ENCODE measurements at regions of chr6 and their contacts with region 1.

Region 1: DNA sequence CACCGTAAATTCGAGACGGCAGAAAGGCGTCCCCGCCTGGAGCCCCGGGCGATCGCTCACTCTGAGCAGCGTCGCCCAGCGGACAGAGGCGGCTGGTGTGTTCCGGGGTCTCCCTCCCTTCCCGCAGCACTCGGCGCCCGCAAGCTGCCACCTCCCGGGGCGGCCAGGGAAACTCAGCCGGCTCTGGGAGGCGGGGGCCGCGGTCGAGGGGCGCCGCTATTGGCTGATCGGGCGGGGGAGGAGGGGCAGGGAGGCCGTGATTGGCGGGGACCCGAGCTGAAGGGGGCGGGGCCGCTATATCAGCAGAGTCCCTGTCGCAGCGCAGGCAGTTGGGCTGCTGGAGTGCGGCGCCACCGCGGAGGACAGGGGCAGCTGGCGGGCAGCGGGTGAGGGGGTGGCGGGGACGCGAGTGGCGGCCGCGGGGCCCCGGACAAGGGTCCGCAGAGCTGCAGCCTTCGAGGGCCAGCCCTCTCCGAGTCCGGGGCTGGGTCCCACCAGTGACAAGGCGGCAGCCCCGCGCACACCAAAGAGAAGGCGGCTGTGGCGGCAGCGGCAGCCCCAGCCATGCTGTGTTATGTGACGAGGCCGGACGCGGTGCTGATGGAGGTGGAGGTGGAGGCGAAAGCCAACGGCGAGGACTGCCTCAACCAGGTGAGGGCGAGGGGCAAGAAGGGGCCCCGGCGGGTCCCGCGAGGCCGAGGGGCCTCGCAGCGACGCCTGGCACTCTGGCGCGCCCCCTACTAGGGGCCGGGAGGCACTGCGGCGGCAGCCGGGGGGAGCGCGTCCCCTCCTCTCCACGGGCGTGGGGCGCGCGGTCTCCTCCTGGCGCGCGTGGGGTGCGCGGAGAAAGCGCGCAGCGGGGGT is at the start of gene MYLIP:
- DNase-seq: peak; percentile 95
- H3K4me3 ChIP-seq: peak within 1 kb of the TSS; percentile 68 to 98 (median 71)
- H3K27ac ChIP-seq: peak within 1 kb of the TSS; percentile 71
- H3K4me1 ChIP-seq: peaks cover 24% of the 10 kb centered on the region
- H3K27me3 ChIP-seq: peaks cover 6% of the 10 kb centered on the region in 2 experiments
- CTCF ChIP-seq: peak; percentile 62 to 87
- POLR2A ChIP-seq: peak; percentile 99
- total RNA-seq, gene MYLIP: 15.4 and 19.2 TPM in 2 replicates

Region 2: GRCh38 chr6:15691250-15691869 is 437.6 kb before region 1 on chr6:
- CTCF ChIA-PET with region 1: interaction called, 45 read pairs
- POLR2A ChIA-PET with region 1: interaction called, 7 read pairs
- dilution Hi-C with region 1: no loop called
- intact Hi-C with region 1: loop called (anchors 1 kb)
- DNase-seq: peak; percentile 86
- H3K4me3 ChIP-seq: no peak overlapping the region
- H3K27ac ChIP-seq: no peak overlapping the region
- H3K4me1 ChIP-seq: peaks cover 3% of the 10 kb centered on the region
- H3K27me3 ChIP-seq: peaks cover 1 to 2% of the 10 kb centered on the region in 2 experiments
- CTCF ChIP-seq: peak; percentile 99 to 100
- POLR2A ChIP-seq: no peak

Region 3: GRCh38 chr6:15922510-15923250 is 206.3 kb before region 1 on chr6:
- CTCF ChIA-PET with region 1: interaction called, 9 read pairs
- POLR2A ChIA-PET with region 1: interaction called, 7 read pairs
- dilution Hi-C with region 1: no loop called
- intact Hi-C with region 1: loop called (anchors 1 kb)
- DNase-seq: peak; percentile 99
- H3K4me3 ChIP-seq: no peak overlapping the region
- H3K27ac ChIP-seq: peak overlapping the region; percentile 86
- H3K4me1 ChIP-seq: peaks cover 23% of the 10 kb centered on the region
- H3K27me3 ChIP-seq: no peaks in the 10 kb centered on the region
- CTCF ChIP-seq: no peak
- POLR2A ChIP-seq: peak; percentile 76

Region 4: GRCh38 chr6:16092140-16092539 is 36.9 kb before region 1 on chr6:
- CTCF ChIA-PET with region 1: interaction called, 7 read pairs
- POLR2A ChIA-PET with region 1: interaction called, 9 read pairs
- dilution Hi-C with region 1: no loop called
- intact Hi-C with region 1: loop called (anchors 1 kb)
- DNase-seq: peak; percentile 81
- H3K4me3 ChIP-seq: no peak overlapping the region
- H3K27ac ChIP-seq: peak overlapping the region; percentile 13
- H3K4me1 ChIP-seq: peaks cover 14% of the 10 kb centered on the region
- H3K27me3 ChIP-seq: no peaks in the 10 kb centered on the region
- CTCF ChIP-seq: no peak
- POLR2A ChIP-seq: no peak

Region 5: DNA sequence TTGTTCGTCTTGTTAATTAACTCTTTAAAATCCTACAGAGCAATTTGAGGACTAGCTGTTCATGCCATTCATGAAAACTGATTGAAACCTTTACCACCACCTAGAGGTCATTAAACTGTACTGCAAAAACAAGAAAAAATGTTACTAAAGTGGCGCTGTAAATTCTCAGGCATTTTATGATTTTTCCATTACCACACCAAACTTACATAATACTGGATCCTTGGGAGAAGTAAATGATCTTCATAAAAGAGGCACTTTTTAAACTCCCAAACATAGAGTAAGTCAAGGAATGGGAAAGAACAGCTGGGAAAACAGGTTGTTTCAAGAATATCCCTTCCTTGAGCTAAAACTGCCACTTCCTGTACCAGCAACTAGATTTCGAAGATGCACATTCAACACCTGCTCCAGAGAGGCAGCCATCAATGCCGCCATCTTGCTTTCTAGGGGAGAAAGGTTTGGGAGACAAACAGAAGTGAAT is 54.2 kb after region 1 on chr6:
- CTCF ChIA-PET with region 1: interaction called, 28 read pairs
- POLR2A ChIA-PET with region 1: interaction called, 5 read pairs
- dilution Hi-C with region 1: no loop called
- intact Hi-C with region 1: loop called (anchors 1 kb)
- DNase-seq: peak; percentile 65
- H3K4me3 ChIP-seq: no peak overlapping the region
- H3K27ac ChIP-seq: no peak overlapping the region
- H3K4me1 ChIP-seq: no peaks in the 10 kb centered on the region
- H3K27me3 ChIP-seq: peaks cover 14% of the 10 kb centered on the region in 2 experiments
- CTCF ChIP-seq: peak; percentile 43 to 46
- POLR2A ChIP-seq: no peak

Region 6: DNA sequence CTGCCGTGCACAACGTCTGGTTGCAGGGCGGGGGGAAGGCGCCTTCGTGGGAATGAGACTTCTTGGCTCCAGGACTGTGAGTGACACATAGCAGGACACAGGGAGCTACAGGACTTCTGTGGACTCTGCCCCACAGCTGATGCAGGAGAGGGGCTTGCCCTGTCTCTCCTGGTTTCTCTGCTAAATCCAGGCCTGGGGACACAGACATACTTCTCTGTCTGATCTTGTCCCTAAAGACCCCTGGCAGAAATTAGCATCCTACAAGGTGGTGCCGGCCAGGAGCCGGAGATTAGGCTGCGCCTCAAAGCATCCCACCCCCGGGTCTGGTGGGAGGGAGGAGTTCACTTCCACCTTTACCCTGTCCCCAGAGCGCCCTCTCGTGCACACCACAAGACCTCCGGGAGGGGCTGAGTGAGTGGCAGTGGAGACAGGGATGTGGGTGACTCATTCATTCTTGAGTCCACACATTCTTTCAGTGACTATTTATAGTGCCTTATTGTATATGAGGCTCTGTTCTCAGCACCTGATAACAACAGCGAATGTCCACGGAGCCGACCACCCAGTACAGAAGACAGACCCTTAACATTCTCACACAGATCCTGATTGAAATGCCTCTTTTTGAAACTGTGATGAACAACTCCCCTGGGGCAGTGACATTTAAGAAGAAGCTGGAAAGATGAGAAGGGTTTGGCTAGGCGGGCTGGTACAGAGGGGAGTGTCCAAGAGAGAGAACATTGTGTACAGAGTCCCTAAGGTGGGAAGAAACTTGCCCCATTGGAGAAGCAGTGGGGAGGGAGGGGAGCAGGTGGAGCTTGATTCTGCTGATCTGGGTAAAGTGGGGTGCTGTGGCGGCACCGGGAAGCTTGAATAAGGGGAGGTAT is 148.3 kb after region 1 on chr6:
- CTCF ChIA-PET with region 1: no interaction called
- POLR2A ChIA-PET with region 1: no interaction called
- dilution Hi-C with region 1: no loop called
- intact Hi-C with region 1: loop called (anchors 1 kb)
- DNase-seq: peak; percentile 96
- H3K4me3 ChIP-seq: no peak overlapping the region
- H3K27ac ChIP-seq: peak overlapping the region; percentile 73
- H3K4me1 ChIP-seq: peaks cover 9% of the 10 kb centered on the region
- H3K27me3 ChIP-seq: no peaks in the 10 kb centered on the region
- CTCF ChIP-seq: peak; percentile 79 to 80
- POLR2A ChIP-seq: no peak

Region 7: GRCh38 chr6:16883414-16883813 is 754.4 kb after region 1 on chr6:
- CTCF ChIA-PET with region 1: no interaction called
- POLR2A ChIA-PET with region 1: no interaction called
- dilution Hi-C with region 1: no loop called
- intact Hi-C with region 1: no loop called
- DNase-seq: no peak
- H3K4me3 ChIP-seq: no peak overlapping the region
- H3K27ac ChIP-seq: no peak overlapping the region
- H3K4me1 ChIP-seq: no peaks in the 10 kb centered on the region
- H3K27me3 ChIP-seq: peaks cover 0 to 3% of the 10 kb centered on the region in 2 experiments
- CTCF ChIP-seq: no peak
- POLR2A ChIP-seq: no peak